SK-N-SH (cell line): ENCODE measurements at regions of chr1 and their contacts with region 1.

Region 1: DNA sequence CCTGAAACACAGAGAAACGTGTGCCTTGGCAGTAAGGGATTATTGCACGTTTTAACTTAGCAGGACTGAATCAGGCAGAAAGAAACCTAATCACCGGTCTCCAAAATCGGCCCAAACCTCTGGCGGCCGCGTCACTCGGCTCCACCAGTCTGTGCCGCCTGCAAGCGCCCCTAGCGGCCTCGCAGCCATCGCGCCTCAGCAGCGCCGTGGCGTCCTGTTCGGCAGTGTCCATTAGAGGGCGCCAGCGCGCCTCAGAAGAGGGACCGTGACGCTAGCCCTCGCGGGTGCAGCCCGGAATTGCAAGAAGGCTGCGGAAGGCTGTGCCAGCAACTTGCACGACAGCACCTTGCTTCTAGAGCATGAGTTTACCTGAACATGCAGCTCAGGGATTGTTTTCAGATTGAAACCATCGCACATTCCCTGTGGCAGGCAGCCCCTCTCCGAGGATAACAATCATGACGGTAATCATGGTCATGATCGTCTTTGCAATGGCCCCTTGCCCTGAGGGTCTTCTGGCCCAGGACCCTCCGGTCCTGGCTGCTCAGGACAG is 164.4 kb downstream of the TRIM33 start:
- DNase-seq: peak; percentile 92
- H3K4me3 ChIP-seq: peak overlapping the region; percentile 52 to 62
- H3K27ac ChIP-seq: no peak overlapping the region
- H3K4me1 ChIP-seq: peaks cover 0 to 7% of the 10 kb centered on the region in 2 experiments; a peak in 1 of 4 replicates
- H3K27me3 ChIP-seq: 0 out of 2 replicates have a peak, but pooled peaks cover 5% of the 10 kb centered on the region
- CTCF ChIP-seq: peak; percentile 100
- EP300 ChIP-seq: no peak
- RAD21 ChIP-seq: peak; percentile 96

Region 2: DNA sequence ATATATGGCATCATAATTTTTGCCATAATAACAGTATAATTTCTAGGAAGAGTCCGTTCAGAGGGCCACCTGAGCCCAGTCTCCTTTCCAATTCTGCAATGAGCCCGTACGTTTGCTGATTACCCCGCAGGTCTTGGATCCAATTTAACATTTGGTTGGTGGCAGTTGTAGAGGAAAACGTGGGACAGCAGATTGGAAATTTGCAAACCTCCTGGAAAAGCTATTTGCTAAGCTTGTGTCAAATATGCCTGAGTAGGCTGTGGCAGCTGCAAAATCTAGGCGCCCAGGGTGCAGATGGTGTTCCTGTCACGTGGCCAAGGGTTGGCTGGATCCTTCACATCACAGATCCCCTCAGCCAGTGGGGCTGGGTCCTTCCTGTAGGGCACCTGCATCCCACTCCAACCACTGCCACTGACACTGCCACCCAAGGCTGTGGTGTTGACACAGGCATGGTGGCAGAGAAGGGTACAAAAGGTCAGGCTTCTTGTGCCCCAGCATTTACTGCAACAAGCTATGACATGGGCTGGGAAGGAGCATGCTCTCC is 18.1 kb before region 1 on chr1:
- CTCF ChIA-PET with region 1: interaction called, 21 read pairs
- POLR2A ChIA-PET with region 1: no interaction called
- DNase-seq: no peak
- H3K4me3 ChIP-seq: no peak overlapping the region
- H3K27ac ChIP-seq: no peak overlapping the region
- H3K4me1 ChIP-seq: no peaks in the 10 kb centered on the region
- H3K27me3 ChIP-seq: peaks cover 9% of the 10 kb centered on the region; the same call in 1 of the 2 replicates
- CTCF ChIP-seq: no peak
- EP300 ChIP-seq: no peak
- RAD21 ChIP-seq: no peak

Region 3: GRCh38 chr1:114369927-114370326 is 23.4 kb after region 1 on chr1:
- CTCF ChIA-PET with region 1: interaction called, 16 read pairs
- POLR2A ChIA-PET with region 1: no interaction called
- DNase-seq: no peak
- H3K4me3 ChIP-seq: no peak overlapping the region
- H3K27ac ChIP-seq: no peak overlapping the region
- H3K4me1 ChIP-seq: no peaks in the 10 kb centered on the region
- H3K27me3 ChIP-seq: no peaks in the 10 kb centered on the region
- CTCF ChIP-seq: no peak
- EP300 ChIP-seq: no peak
- RAD21 ChIP-seq: no peak

Region 4: DNA sequence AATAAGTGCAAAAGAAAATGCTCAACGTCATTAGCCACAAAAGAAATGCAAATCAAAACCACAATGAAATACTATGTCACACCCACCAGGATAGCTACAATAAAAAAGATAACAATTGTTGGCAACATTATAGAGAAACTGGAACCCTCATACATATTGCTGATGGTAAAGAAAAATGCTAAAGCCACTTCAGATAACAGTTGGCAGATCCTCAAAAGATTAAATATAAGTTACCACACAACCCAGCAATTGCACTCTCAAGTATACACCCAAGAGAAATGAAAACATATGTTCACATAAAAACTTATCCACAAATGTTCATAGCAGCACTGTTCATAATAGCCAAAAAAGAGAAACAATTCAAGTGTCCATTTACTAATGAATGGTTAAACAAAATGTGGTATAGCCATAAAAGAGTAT is 143.7 kb after region 1 on chr1:
- CTCF ChIA-PET with region 1: no interaction called
- POLR2A ChIA-PET with region 1: no interaction called
- DNase-seq: no peak
- H3K4me3 ChIP-seq: no peak overlapping the region
- H3K27ac ChIP-seq: no peak overlapping the region
- H3K4me1 ChIP-seq: no peaks in the 10 kb centered on the region; a peak in 2 of 4 replicates
- H3K27me3 ChIP-seq: no peaks in the 10 kb centered on the region
- CTCF ChIP-seq: no peak
- EP300 ChIP-seq: no peak
- RAD21 ChIP-seq: no peak

Region 5: DNA sequence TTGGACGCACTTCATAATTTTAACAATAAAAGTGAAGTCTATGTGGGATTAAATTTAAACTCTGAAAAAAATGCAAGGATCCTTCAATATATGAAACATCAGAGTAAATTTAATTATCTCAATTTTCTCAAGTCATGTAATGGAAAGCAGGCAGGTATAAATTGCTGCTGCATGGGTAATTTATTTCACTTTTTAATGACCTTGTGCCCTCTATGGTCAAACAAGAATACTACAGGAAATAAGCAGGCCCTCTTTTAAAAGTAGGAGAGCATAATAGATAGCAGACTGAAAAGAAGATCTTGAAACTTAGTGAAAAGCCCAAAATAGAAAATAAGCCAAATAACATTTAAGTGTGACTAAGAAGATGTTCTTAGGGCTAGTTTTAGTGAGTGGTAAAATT is 212.0 kb after region 1 on chr1:
- CTCF ChIA-PET with region 1: interaction called, 29 read pairs
- POLR2A ChIA-PET with region 1: no interaction called
- DNase-seq: peak; percentile 29
- H3K4me3 ChIP-seq: no peak overlapping the region
- H3K27ac ChIP-seq: no peak overlapping the region
- H3K4me1 ChIP-seq: no peaks in the 10 kb centered on the region
- H3K27me3 ChIP-seq: no peaks in the 10 kb centered on the region
- CTCF ChIP-seq: peak; percentile 62
- EP300 ChIP-seq: no peak
- RAD21 ChIP-seq: peak; percentile 63